Mucosa of descending colon (tissue), 3 donors: ENCODE measurements at regions of chr10 and their contacts with region 1.

Region 1: DNA sequence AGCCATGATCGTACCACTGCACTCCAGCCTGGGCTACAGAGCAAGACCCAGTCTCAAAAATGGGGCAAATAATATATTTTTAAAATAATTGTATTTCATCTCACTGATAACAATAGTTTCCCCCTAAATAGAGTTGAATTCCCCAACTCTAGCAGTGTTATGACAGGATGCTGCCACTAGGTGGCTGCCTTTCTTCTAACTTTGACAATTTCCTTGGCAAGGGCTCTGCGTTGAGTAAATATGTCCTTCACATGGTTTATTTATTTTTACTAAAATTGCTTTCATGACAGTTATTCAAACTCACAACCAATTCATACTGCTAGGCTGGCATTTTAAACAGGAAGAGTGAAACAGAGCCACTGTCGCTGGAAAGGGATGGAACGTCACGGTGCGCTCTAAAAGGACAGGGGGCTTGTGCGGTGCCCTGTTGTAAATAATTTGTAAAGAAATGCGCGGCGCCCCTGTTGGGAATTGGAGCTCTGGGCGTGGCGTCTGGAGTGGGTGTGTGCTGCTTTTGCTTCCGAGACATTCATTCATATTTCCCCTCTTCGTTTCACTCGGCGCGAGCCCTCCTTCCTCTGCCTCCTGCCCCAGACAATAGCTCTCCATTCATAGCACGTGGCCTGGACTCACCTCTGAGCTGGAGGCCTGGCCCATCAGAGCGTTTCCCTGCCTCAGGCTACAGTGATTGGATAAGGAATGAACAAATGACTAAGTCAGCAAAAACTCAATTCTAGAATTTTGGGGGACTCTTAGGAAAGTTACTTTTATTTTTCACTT is 20.5 kb upstream of the PITRM1 start:
- DNase-seq: peak in 2 of 3 donors; percentile 47 to 82
- ATAC-seq: peak; percentile 71
- H3K4me3 ChIP-seq: no peak overlapping the region
- H3K4me1 ChIP-seq: peaks cover 6% of the 10 kb centered on the region
- CTCF ChIP-seq: peak; percentile 81

Region 2: GRCh38 chr10:4770801-4771553 is 1577.9 kb after region 1 on chr10:
- intact Hi-C with region 1: loop called in 1 of 2 experiments (anchors 5 kb)
- DNase-seq: no peak
- ATAC-seq: peak; percentile 81
- H3K4me3 ChIP-seq: no peak overlapping the region
- H3K4me1 ChIP-seq: no peaks in the 10 kb centered on the region
- CTCF ChIP-seq: no peak